WTC11 (cell line): ENCODE measurements at regions of chr1 and their contacts with region 1.

Region 1: GRCh38 chr1:23634842-23635651 is 56.6 kb upstream of the RPL11 start:
- DNase-seq: peak; percentile 61
- ATAC-seq: peak; percentile 70
- H3K4me3 Mint-ChIP-seq: no peak overlapping the region
- H3K27ac Mint-ChIP-seq: peak overlapping the region; percentile 13; the same call in 1 of the 2 replicates
- H3K4me1 Mint-ChIP-seq: peaks cover 28% of the 10 kb centered on the region
- H3K27me3 Mint-ChIP-seq: no peaks in the 10 kb centered on the region; the same call in 1 of the 2 replicates
- CTCF ChIP-seq: peak; percentile 82

Region 2: DNA sequence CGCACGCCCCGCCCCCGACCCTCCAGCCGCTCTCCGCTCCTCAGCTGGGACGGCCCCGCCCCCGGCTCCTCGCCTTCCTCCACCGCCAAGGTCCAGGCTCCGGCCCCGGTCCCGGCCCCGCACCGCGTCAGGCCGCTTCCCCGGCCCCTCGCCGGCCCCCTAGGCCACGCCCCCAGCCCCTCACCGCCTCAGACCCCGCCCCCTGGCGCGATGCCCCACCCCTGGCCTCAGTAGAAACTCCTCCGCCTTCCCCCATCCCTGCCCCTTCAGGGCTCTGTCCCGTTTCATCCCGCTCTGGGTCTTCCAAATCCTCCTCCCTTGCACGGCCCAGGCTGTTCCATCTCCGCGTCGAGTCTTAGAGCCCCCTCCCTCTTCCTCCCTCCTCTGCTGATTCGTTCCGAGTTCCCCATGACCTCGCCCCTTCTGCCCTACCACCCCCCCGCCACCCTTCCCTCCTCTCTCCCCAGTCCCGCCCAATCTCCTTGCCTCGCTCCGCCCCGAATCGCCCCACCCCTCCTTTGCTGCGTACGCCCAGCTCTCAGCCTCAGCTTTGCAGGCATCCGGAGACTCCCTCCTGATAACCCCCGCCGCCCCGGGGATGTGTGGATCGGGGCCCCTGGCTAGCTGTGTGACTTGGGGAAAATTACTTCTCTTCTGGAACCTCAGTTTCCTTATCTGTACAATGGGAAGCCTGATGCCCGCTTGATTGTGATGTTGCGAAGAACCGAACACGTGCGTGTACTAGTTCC is 150.6 kb before region 1 on chr1:
- CTCF ChIA-PET with region 1: interaction called, 15 read pairs
- POLR2A ChIA-PET with region 1: no interaction called
- DNase-seq: peak; percentile 97
- ATAC-seq: peak; percentile 87
- H3K4me3 Mint-ChIP-seq: peak overlapping the region; percentile 82
- H3K27ac Mint-ChIP-seq: peak overlapping the region; percentile 96
- H3K4me1 Mint-ChIP-seq: peaks cover 44% of the 10 kb centered on the region
- H3K27me3 Mint-ChIP-seq: peaks cover 13% of the 10 kb centered on the region
- CTCF ChIP-seq: no peak

Region 3: DNA sequence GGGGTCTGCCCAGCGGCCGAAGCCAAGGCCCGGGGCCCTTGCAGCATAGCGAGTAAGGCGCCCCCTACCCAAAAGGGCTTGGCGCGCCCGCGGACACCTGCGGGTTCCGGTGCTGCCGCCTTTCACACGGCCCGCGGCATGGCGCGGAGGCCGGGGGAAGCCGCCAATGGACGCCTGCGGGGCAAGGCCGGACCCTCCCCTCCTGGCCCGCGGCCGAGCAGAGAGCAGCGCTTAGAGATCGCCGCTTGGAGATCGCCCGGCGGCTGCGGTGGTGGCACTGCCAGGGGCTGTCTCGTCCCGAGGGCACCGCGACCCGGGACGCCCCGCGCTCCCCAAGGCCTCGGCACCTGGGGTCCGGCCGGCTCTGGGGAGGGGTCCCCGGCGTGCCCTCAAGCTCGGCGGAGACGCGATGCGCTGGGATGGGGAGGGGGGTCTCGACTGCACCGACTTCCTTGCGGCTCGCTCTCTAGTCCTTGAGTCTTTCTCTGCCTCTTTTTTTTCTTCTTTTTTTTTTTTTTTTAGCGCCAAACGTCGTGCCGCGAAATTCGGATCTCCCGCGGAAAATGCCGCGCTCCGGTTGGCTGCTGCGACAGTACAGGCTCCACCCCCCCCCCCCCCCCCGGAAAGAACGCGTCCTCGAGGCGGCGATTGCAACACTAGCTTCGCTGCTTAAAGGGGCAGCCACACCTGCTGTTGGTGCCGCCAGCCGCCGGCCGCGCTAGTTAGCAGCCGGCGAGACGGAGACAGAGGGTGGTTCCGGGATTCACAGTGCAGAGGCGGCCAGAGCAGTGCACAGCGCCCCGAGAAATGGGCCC is 104.1 kb before region 1 on chr1 and contains the start of gene E2F2:
- CTCF ChIA-PET with region 1: interaction called, 19 read pairs
- POLR2A ChIA-PET with region 1: no interaction called
- DNase-seq: peak; percentile 78
- ATAC-seq: peak; percentile 81
- H3K4me3 Mint-ChIP-seq: peak within 1 kb of the TSS; percentile 80
- H3K27ac Mint-ChIP-seq: no peak within 1 kb of the TSS
- H3K4me1 Mint-ChIP-seq: peaks cover 23% of the 10 kb centered on the region
- H3K27me3 Mint-ChIP-seq: peaks cover 52% of the 10 kb centered on the region
- CTCF ChIP-seq: no peak
- total RNA-seq, gene E2F2: 4.9 to 5.6 TPM (median 5.4 TPM) in 3 replicates

Region 4: DNA sequence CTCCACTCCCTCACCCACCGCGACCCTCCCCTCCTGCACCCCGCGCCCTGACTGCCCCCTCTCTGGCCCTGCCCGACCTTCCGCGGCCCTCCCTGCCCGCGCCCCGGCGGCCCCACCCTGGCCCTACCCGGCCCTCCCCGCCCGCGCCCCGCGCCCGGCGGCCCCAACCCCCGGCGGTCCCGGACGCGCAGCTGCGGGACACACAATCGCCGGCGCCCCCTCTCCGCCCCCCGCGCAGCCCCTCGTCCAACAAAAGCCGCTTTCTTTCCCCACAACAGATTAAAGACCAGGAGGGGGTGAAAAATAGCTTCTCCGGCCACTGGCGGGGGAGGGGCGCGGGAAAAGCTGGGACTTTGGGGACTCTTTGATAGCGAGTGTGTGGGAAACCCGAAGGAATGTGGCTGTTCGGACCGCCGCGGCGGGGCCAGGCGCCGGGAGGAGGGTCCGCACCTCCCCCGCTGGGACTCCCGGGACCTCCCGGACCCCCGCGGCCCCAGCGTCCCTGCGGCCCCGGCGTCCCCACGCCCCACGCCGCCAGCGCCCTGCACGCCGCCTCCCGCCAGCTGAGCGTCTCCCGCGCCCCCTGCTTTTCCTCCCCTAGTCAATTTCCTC is 66.9 kb before region 1 on chr1:
- CTCF ChIA-PET with region 1: interaction called, 51 read pairs
- POLR2A ChIA-PET with region 1: no interaction called
- DNase-seq: peak; percentile 58
- ATAC-seq: peak; percentile 11; the same call in 1 of the 2 replicates
- H3K4me3 Mint-ChIP-seq: peak overlapping the region; percentile 78
- H3K27ac Mint-ChIP-seq: peak overlapping the region; percentile 93
- H3K4me1 Mint-ChIP-seq: peaks cover 62% of the 10 kb centered on the region
- H3K27me3 Mint-ChIP-seq: peaks cover 2% of the 10 kb centered on the region; the same call in 1 of the 2 replicates
- CTCF ChIP-seq: no peak

Region 5: GRCh38 chr1:23598424-23598823 is 36.6 kb before region 1 on chr1:
- CTCF ChIA-PET with region 1: interaction called, 70 read pairs
- POLR2A ChIA-PET with region 1: interaction called, 12 read pairs
- DNase-seq: peak; percentile 92
- ATAC-seq: peak; percentile 90
- H3K4me3 Mint-ChIP-seq: no peak overlapping the region
- H3K27ac Mint-ChIP-seq: peak overlapping the region; percentile 92; the same call in 1 of the 2 replicates
- H3K4me1 Mint-ChIP-seq: peaks cover 85% of the 10 kb centered on the region
- H3K27me3 Mint-ChIP-seq: no peaks in the 10 kb centered on the region; the same call in 1 of the 2 replicates
- CTCF ChIP-seq: no peak

Region 6: DNA sequence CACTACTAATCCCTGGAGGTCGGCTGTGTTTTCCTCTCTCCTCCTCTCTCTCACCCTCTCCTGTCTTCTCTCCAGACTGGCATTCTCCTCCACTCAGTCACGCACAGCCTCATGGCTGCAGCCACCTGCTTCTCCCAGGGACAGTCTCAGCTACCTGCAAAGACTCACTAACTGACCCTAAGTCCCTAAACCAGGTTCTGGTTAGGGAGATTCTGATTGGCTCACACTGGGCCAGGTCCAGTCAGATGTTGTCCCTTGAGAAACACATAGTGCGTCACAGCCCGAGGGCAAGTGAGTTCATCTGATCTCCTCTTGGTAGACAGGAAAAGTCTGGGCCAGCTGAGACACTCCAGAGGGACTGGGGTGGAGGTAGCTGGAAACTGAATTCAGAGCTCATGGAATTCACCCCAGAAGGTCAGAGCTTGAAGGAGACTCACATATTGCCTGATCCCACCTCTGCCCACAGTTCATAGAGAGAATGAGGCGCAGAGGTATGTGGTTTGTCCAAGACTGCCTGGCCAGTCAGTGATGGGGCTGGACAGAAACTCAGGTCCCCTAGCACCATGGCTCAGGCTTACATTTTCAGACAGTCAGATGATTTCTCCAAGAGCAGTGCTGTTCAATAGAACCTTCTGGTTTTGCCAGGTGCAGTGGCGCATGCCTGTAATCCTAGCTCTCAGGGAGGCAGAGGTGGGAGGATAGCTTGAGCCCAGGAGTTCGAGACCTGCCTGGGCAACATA is 16.2 kb after region 1 on chr1:
- CTCF ChIA-PET with region 1: interaction called, 59 read pairs
- POLR2A ChIA-PET with region 1: interaction called, 8 read pairs
- DNase-seq: no peak
- ATAC-seq: no peak; the same call in 1 of the 2 replicates
- H3K4me3 Mint-ChIP-seq: no peak overlapping the region
- H3K27ac Mint-ChIP-seq: 0 out of 2 replicates have a peak overlapping the region, but pooled peaks have one; percentile 32
- H3K4me1 Mint-ChIP-seq: no peaks in the 10 kb centered on the region
- H3K27me3 Mint-ChIP-seq: peaks cover 4% of the 10 kb centered on the region
- CTCF ChIP-seq: no peak

Region 7: GRCh38 chr1:23691499-23692307 is 56.7 kb after region 1 on chr1 and contains the start of gene RPL11:
- CTCF ChIA-PET with region 1: interaction called, 11 read pairs
- POLR2A ChIA-PET with region 1: interaction called, 4 read pairs
- DNase-seq: peak; percentile 89
- ATAC-seq: peak; percentile 98
- H3K4me3 Mint-ChIP-seq: peak within 1 kb of the TSS; percentile 98
- H3K27ac Mint-ChIP-seq: peak within 1 kb of the TSS; percentile 93
- H3K4me1 Mint-ChIP-seq: peaks cover 44% of the 10 kb centered on the region
- H3K27me3 Mint-ChIP-seq: no peaks in the 10 kb centered on the region; the same call in 1 of the 2 replicates
- CTCF ChIP-seq: no peak
- total RNA-seq, gene RPL11: 1,406 to 1,500 TPM (median 1,442 TPM) in 3 replicates